WTC11 (cell line): ENCODE measurements at regions of chr9 and their contacts with region 1.

Region 1: GRCh38 chr9:104386425-104387069 is 117.5 kb upstream of the OR13F1 start:
- DNase-seq: no peak
- ATAC-seq: peak; percentile 95
- H3K4me3 Mint-ChIP-seq: no peak overlapping the region
- H3K27ac Mint-ChIP-seq: no peak overlapping the region
- H3K4me1 Mint-ChIP-seq: peaks cover 15% of the 10 kb centered on the region
- H3K27me3 Mint-ChIP-seq: no peaks in the 10 kb centered on the region
- CTCF ChIP-seq: peak; percentile 62

Region 2: GRCh38 chr9:104177003-104177611 is 209.4 kb before region 1 on chr9:
- CTCF ChIA-PET with region 1: interaction called, 36 read pairs
- POLR2A ChIA-PET with region 1: no interaction called
- DNase-seq: no peak
- ATAC-seq: peak; percentile 65
- H3K4me3 Mint-ChIP-seq: no peak overlapping the region
- H3K27ac Mint-ChIP-seq: no peak overlapping the region
- H3K4me1 Mint-ChIP-seq: peaks cover 10% of the 10 kb centered on the region
- H3K27me3 Mint-ChIP-seq: no peaks in the 10 kb centered on the region
- CTCF ChIP-seq: peak; percentile 19; the same call in 1 of the 2 replicates

Region 3: GRCh38 chr9:104417296-104417695 is 30.7 kb after region 1 on chr9:
- CTCF ChIA-PET with region 1: no interaction called
- POLR2A ChIA-PET with region 1: no interaction called
- DNase-seq: no peak
- ATAC-seq: no peak
- H3K4me3 Mint-ChIP-seq: no peak overlapping the region
- H3K27ac Mint-ChIP-seq: no peak overlapping the region
- H3K4me1 Mint-ChIP-seq: no peaks in the 10 kb centered on the region
- H3K27me3 Mint-ChIP-seq: no peaks in the 10 kb centered on the region
- CTCF ChIP-seq: no peak